ENCODE measurements at regions of chr16 and their contacts with region 1.

Region 1: GRCh38 chr16:31179747-31180459 is at the start of gene FUS:
- DNase-seq: peak; percentile 83 to 87
- ATAC-seq: peak; percentile 83
- H3K4me3 ChIP-seq: peak within 1 kb of the TSS; percentile 77 to 100 (median 86)
- H3K27ac ChIP-seq: peak within 1 kb of the TSS; percentile 94 to 100 (median 96)
- H3K4me1 ChIP-seq: peaks cover 37 to 42% of the 10 kb centered on the region in 2 donors
- H3K27me3 ChIP-seq: no peaks in the 10 kb centered on the region
- CTCF ChIP-seq: peak in 1 of 5 experiments; percentile 28
- POLR2A ChIP-seq: peak; percentile 98 to 99
- total RNA-seq, gene FUS: 20.6 to 45.9 (median 35.1) TPM

Region 2: GRCh38 chr16:30747799-30748634 is 431.9 kb before region 1 on chr16 and contains the start of gene PHKG2:
- in situ Hi-C with region 1: no loop called
- intact Hi-C with region 1: loop called (anchors 5 kb)
- DNase-seq: peak; percentile 99 to 100
- ATAC-seq: peak; percentile 95 to 96
- H3K4me3 ChIP-seq: peak within 1 kb of the TSS; percentile 76 to 91 (median 88)
- H3K27ac ChIP-seq: peak within 1 kb of the TSS; percentile 73 to 91 (median 79)
- H3K4me1 ChIP-seq: peaks cover 7 to 8% of the 10 kb centered on the region in 2 donors
- H3K27me3 ChIP-seq: no peaks in the 10 kb centered on the region
- CTCF ChIP-seq: no peak
- POLR2A ChIP-seq: peak; percentile 48 to 53
- total RNA-seq, gene PHKG2: 8.8 to 30.0 (median 21.6) TPM

Region 3: GRCh38 chr16:31073968-31074813 is 105.7 kb before region 1 on chr16 and contains the starts of genes ZNF646 and ZNF668:
- in situ Hi-C with region 1: no loop called
- intact Hi-C with region 1: loop called (anchors 1 kb)
- DNase-seq: peak; percentile 98
- ATAC-seq: peak; percentile 88 to 94
- H3K4me3 ChIP-seq: peak within 1 kb of the TSS; percentile 95 to 100 (median 96)
- H3K27ac ChIP-seq: peak within 1 kb of the TSS; percentile 97 to 99 (median 99)
- H3K4me1 ChIP-seq: peaks cover 24 to 30% of the 10 kb centered on the region in 2 donors
- H3K27me3 ChIP-seq: no peaks in the 10 kb centered on the region
- CTCF ChIP-seq: no peak
- POLR2A ChIP-seq: peak; percentile 78 to 93
- total RNA-seq, gene ZNF646: 11.7 to 33.2 (median 21.5) TPM
- total RNA-seq, gene ZNF668: 6.6 to 16.0 (median 11.0) TPM

Region 4: DNA sequence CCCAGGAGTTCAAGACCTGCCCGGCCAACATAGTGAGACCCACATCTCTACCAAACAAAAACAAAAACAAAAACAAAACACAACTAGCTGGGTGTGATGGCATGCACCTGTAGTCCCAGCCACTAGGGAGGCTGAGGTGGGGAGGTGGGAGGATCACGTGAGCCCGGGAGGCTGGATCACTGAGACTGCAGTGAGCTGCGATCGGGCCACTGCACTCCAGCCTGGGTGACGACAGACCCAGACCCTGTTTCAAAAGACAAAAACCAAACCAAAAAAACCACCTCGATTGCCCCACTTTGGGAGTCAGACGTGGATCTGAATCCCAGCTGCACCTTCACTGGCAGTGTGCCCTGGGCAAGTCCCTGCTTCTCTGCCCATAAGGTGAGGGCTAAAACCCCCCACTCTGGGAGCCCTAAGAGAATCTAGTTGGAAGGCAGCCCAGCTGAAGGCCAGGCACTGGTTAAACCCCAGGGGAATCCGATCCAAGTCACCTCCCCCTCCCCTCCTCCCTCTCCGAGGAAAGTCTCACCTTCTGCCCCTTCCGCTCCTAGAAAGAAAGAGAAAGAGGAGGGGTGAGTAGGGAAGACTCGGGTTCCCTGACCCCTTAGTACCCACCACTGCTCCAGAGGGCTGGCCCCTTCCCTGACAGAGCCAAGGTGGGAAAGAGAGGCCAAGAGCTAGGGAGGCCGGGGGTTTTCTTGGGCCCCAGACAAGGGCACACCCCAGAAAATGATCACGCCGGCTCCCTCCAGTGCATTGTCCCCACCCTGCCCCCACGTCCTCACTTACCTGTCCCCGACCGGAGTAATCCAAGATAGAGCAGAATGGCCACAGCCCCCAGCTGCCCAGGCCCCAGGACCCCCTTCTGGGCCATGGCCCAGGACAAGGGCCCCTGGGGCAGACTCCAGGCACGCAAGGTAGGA is 45.0 kb before region 1 on chr16:
- in situ Hi-C with region 1: no loop called
- intact Hi-C with region 1: no loop called
- DNase-seq: no peak
- ATAC-seq: no peak
- H3K4me3 ChIP-seq: no peak overlapping the region
- H3K27ac ChIP-seq: no peak overlapping the region
- H3K4me1 ChIP-seq: peaks cover 9 to 15% of the 10 kb centered on the region in 2 donors
- H3K27me3 ChIP-seq: no peaks in the 10 kb centered on the region
- CTCF ChIP-seq: no peak
- POLR2A ChIP-seq: no peak

Region 5: GRCh38 chr16:31215287-31216162 is 35.6 kb after region 1 on chr16:
- in situ Hi-C with region 1: no loop called
- intact Hi-C with region 1: loop called (anchors 1 kb)
- DNase-seq: peak; percentile 60 to 83
- ATAC-seq: peak; percentile 52 to 68
- H3K4me3 ChIP-seq: peak overlapping the region; percentile 75 to 82 (median 78)
- H3K27ac ChIP-seq: peak overlapping the region; percentile 99 to 100 (median 100)
- H3K4me1 ChIP-seq: peaks cover 42 to 47% of the 10 kb centered on the region in 2 donors
- H3K27me3 ChIP-seq: no peaks in the 10 kb centered on the region
- CTCF ChIP-seq: no peak
- POLR2A ChIP-seq: peak; percentile 58 to 60

Region 6: GRCh38 chr16:31440516-31441184 is 260.7 kb after region 1 on chr16:
- in situ Hi-C with region 1: loop called in 1 of 4 experiments (anchors 10 kb)
- intact Hi-C with region 1: no loop called
- DNase-seq: no peak
- ATAC-seq: no peak
- H3K4me3 ChIP-seq: no peak overlapping the region
- H3K27ac ChIP-seq: peak overlapping the region; percentile 87 to 99 (median 96)
- H3K4me1 ChIP-seq: peaks cover 19 to 21% of the 10 kb centered on the region in 2 donors
- H3K27me3 ChIP-seq: no peaks in the 10 kb centered on the region
- CTCF ChIP-seq: no peak
- POLR2A ChIP-seq: no peak

Region 7: GRCh38 chr16:31873556-31874365 is 693.9 kb after region 1 on chr16 and contains the start of gene ZNF267:
- in situ Hi-C with region 1: loop called in 2 of 4 experiments (anchors 25 kb)
- intact Hi-C with region 1: no loop called
- DNase-seq: peak; percentile 88 to 94
- ATAC-seq: peak; percentile 97 to 98
- H3K4me3 ChIP-seq: peak within 1 kb of the TSS; percentile 77 to 98 (median 88)
- H3K27ac ChIP-seq: peak within 1 kb of the TSS; percentile 76 to 92 (median 84)
- H3K4me1 ChIP-seq: peaks cover 16 to 23% of the 10 kb centered on the region in 2 donors
- H3K27me3 ChIP-seq: no peaks in the 10 kb centered on the region
- CTCF ChIP-seq: no peak
- POLR2A ChIP-seq: peak; percentile 76 to 77
- total RNA-seq, gene ZNF267: 6.5 to 13.3 (median 8.2) TPM

Measured in gastrocnemius medialis (tissue), 4 donors.